ENCODE measurements at regions of chr18 and their contacts with region 1.

Region 1: GRCh38 chr18:25780105-25780504 is 310.3 kb downstream of the SS18 start:
- DNase-seq: no peak
- ATAC-seq: no peak

Region 2: GRCh38 chr18:25076980-25077943 is 702.8 kb before region 1 on chr18:
- intact Hi-C with region 1: no loop called
- DNase-seq: no peak
- ATAC-seq: no peak

Region 3: DNA sequence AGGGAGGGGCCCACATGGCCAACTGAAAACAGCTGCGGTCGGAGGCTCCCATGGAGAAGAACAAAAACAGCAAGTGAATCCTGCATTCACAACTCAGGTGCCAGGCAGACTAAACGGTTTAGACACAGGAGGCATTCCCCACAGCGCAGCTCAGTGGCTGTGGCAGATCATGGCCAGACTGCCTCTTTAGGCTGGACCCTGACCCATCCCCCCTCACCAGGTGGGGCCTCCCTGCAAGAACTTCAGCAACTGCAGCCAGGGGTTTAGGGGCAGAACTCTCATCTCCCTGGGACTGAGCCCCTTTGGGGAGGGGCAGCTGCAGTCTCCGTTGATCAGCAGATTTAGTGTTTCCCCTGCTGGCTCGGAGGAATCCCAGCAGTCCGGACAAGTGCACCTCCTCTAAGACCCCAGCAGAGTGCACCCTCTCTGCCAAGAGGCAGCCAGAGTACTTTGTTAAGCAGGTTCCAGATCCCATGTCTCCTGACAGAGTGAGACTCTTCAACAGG is 36.4 kb before region 1 on chr18:
- intact Hi-C with region 1: loop called (anchors 5 kb)
- DNase-seq: no peak
- ATAC-seq: no peak